ENCODE measurements at regions of chr15 and their contacts with region 1.

Region 1: DNA sequence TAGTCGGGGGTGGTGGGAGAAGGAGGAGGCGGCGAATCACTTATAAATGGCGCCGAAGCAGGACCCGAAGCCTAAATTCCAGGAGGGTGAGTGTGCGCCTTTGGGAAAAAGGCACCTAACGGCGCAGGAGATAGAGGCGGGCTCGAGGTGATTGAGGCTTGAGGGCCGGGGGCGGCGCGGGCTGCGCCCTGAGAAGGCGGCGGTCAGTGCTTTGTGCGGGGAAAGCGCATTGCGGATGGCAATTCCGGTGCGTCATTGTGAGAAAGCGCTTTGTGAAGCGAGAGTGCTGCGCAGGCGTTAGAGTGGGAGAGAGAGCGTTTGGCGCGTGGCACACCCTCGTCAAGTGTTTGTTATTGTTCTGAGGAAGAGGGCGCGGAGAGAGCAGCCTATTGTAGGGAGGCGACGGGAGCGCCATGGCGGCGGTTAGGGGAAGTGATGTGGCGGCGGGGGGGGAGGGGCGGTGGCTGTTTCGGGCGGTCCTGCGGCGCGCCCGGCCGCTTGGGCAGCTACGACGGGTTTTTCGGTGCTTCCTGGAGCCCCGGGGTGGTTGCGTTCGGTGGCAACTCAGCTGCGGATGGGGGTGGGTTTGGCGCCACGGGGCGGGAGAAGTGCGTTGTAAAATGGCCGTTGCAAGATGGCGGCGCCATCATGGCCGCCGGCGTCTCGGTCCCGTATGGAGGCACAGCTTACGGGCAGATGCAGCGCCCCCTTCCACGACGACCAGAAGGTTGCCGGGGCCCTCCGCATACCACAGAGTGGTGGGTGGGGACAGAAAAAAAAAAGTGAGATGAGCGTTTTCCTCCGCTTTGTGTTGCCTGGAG is 492 bp downstream of the MORF4L1 start:
- DNase-seq: peak; percentile 85
- H3K4me3 ChIP-seq: peak overlapping the region; percentile 99
- H3K27ac ChIP-seq: peak overlapping the region; percentile 100
- H3K27me3 ChIP-seq: no peaks in the 10 kb centered on the region
- CTCF ChIP-seq: peak; percentile 59

Region 2: DNA sequence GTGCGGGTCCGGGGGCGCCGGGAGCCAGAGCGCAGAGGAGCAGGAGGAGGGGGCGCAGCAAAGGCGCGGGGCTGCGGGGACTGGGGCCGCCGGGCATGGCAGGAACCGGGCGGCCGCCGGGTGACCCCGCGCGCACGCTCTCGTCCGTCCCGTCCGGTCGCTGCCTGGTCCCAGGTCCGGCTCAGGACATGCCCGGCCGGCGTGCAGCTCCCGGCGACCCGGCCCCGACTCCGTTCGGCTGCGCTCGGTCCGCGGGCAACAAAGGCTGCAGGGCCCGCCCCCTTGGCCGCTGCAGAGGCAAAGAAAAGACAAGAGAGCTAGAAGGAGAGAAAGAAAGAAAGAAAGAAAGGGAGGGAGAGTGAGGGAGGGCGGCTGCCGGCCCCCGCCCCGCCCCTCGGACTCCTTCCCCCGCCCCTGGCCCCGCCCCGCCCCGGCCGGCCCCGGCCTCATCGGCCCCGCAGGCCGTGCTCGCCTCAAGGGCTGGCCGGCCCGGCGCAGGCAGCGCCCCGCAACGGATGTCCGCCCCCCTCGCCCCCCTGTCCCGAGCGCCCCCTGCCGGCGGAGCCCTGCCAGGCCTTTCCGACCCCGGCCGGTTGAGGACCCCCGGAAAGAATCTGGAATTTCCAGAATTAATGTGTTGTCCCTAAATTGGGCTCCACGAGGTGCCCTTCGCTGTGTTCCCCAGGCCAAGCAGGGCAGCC is 61.9 kb before region 1 on chr15 and contains the start of gene ADAMTS7:
- CTCF ChIA-PET with region 1: interaction called, 7 read pairs
- POLR2A ChIA-PET with region 1: interaction called, 13 read pairs
- DNase-seq: peak; percentile 32
- H3K4me3 ChIP-seq: peak within 1 kb of the TSS; percentile 72
- H3K27ac ChIP-seq: peak within 1 kb of the TSS; percentile 57
- H3K27me3 ChIP-seq: no peaks in the 10 kb centered on the region
- CTCF ChIP-seq: peak; percentile 73
- polyA plus RNA-seq, gene ADAMTS7: 5.0 and 6.4 TPM in 2 replicates

Region 3: DNA sequence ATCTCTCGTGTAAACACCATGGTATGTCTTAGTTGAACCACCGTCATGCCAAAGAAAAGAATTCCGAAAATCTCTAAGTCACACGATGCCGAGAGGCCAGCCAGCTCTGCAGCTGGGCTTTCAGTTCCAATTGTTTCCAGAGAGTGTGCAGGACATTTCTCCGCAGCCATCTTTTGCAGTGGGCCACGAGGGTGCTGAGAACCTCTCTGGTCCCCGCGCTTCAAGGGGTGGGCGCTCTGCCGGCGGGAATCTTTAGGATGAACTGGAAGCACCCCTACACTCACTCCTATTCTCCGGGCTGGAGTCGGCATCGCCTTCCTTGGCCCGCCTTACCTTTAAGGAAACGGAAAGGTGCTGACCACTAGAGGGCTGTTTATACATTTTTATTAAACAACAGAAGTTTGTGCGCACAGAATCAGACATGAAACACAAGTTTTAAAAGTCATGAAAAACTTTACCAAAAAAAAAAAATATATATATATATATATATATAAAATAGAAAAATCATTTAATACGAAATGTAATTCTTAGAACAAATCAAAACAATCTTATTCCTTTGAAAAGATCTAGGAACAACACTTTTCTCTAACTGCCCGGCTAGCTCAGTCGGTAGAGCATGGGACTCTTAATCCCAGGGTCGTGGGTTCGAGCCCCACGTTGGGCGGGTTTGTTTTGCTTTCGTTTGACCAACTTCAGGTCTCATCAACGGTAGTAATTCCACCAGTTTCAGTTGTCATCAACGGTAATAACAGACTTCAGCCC is 13.0 kb before region 1 on chr15:
- CTCF ChIA-PET with region 1: interaction called, 3 read pairs
- POLR2A ChIA-PET with region 1: interaction called, 22 read pairs
- DNase-seq: peak; percentile 65
- H3K4me3 ChIP-seq: peak overlapping the region; percentile 62
- H3K27ac ChIP-seq: peak overlapping the region; percentile 93
- H3K27me3 ChIP-seq: no peaks in the 10 kb centered on the region
- CTCF ChIP-seq: peak; percentile 61

Region 4: DNA sequence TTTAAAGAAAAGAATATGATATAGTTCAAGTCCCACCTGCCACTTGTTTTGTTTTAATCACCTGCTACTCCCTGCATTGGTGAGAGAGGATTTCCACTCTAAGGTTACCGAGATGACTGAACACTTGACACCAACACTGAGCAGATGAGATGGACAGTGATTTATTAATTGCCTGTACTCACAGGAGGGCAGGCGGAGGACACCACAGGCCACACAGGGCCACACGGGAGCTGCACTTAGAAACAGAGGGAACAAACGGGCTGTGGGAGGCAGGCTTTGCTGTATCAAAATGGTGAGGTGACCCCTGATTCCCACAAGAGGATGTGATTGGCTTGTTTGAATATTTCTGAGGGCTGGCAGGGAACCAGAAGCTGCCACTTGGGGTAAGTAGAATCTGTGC is 569.7 kb after region 1 on chr15:
- CTCF ChIA-PET with region 1: no interaction called
- POLR2A ChIA-PET with region 1: no interaction called
- DNase-seq: no peak
- H3K4me3 ChIP-seq: no peak overlapping the region
- H3K27ac ChIP-seq: no peak overlapping the region
- H3K27me3 ChIP-seq: no peaks in the 10 kb centered on the region
- CTCF ChIP-seq: no peak